ENCODE measurements at regions of chr17 and their contacts with region 1.

Region 1: DNA sequence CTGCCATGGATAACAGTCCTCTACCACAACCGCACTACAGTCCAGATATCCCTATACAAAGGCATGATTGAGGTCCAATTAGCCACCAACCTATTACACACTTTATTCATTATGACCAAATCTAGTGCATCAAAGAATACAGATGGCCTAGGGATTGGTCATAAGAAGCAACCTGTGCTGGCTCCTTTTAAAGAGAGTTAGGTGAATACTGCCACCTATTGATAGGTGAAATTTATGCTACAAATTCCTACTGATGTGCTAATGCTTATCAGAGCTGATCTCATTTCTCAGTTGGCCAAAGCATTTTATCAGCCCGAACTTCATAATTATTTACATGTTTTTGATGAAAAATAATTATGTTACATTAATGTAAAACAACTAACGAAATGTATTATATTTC is 166.2 kb downstream of the ANKFN1 start:
- DNase-seq: peak; percentile 70
- ATAC-seq: peak; percentile 79
- H3K4me3 ChIP-seq: no peak overlapping the region
- H3K27ac ChIP-seq: no peak overlapping the region
- H3K4me1 ChIP-seq: peaks cover 3% of the 10 kb centered on the region
- H3K27me3 ChIP-seq: peaks cover 1% of the 10 kb centered on the region; the same call in 1 of the 2 replicates
- CTCF ChIP-seq: peak; percentile 66
- POLR2A ChIP-seq: no peak
- RAD21 ChIP-seq: peak; percentile 77

Region 2: GRCh38 chr17:56230660-56231059 is 88.9 kb before region 1 on chr17:
- CTCF ChIA-PET with region 1: no interaction called
- POLR2A ChIA-PET with region 1: no interaction called
- dilution Hi-C with region 1: no loop called
- in situ Hi-C with region 1: no loop called
- intact Hi-C with region 1: no loop called
- DNase-seq: no peak
- ATAC-seq: no peak
- H3K4me3 ChIP-seq: no peak overlapping the region
- H3K27ac ChIP-seq: no peak overlapping the region
- H3K4me1 ChIP-seq: no peaks in the 10 kb centered on the region
- H3K27me3 ChIP-seq: no peaks in the 10 kb centered on the region
- CTCF ChIP-seq: no peak
- POLR2A ChIP-seq: no peak
- RAD21 ChIP-seq: no peak

Region 3: DNA sequence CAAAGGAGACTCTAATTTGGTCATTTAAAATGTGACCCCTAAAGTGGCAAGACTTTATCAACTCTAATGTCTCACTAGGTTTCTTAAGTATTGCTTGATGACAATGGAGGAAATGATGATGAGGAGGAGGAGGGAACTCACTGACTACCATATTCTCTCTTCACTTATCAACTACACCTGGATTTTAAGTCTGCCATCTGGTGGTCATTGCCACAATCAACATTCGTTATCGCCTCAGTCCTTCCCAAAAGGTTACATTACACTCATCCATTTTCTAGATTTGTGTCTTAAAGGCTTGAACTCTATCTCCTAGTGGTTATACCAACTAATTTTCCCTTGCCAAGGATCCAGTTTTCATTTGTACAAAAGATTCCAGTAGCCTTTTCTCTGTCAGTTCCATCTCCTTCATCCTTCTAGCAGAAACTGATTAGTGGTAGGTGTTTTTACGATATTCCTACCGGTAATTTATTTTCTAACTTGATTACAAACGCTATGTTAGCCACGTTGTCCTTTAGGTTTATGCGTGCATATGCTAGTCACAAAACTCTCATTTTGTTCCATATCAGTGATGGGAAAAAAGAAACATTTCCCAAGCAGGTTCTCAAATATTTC is 159.4 kb after region 1 on chr17:
- CTCF ChIA-PET with region 1: interaction called, 3 read pairs
- POLR2A ChIA-PET with region 1: no interaction called
- dilution Hi-C with region 1: no loop called
- in situ Hi-C with region 1: no loop called
- intact Hi-C with region 1: loop called (anchors 2 kb)
- DNase-seq: peak; percentile 25
- ATAC-seq: no peak
- H3K4me3 ChIP-seq: no peak overlapping the region
- H3K27ac ChIP-seq: no peak overlapping the region
- H3K4me1 ChIP-seq: no peaks in the 10 kb centered on the region
- H3K27me3 ChIP-seq: no peaks in the 10 kb centered on the region; the same call in 1 of the 2 replicates
- CTCF ChIP-seq: peak; percentile 48
- POLR2A ChIP-seq: no peak
- RAD21 ChIP-seq: peak; percentile 50

Region 4: DNA sequence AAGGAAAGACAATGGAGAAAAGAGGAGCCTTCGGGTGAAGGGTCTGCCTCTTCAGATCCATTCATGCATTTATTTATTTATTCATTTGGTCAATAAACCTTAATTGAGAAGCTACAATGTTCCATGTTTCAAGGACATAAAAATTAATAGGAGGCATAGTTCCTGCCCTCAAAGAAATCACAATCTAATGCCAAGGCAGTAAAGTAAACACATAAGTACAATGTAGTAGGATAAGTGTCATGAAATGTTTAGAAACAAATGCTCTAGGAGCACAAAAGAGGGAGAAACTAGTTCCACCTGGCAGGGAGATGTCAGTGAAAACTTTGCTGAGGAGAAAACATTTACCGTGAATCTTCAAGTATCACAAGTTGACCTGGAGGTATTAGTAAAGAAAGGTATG is 170.5 kb after region 1 on chr17:
- CTCF ChIA-PET with region 1: no interaction called
- POLR2A ChIA-PET with region 1: no interaction called
- dilution Hi-C with region 1: no loop called
- in situ Hi-C with region 1: no loop called
- intact Hi-C with region 1: no loop called
- DNase-seq: no peak
- ATAC-seq: no peak
- H3K4me3 ChIP-seq: no peak overlapping the region
- H3K27ac ChIP-seq: no peak overlapping the region
- H3K4me1 ChIP-seq: no peaks in the 10 kb centered on the region
- H3K27me3 ChIP-seq: no peaks in the 10 kb centered on the region
- CTCF ChIP-seq: no peak
- POLR2A ChIP-seq: no peak
- RAD21 ChIP-seq: no peak